Calu3 (cell line): ENCODE measurements at regions of chrX and their contacts with region 1.

Region 1: GRCh38 chrX:150715184-150715583 is 22.0 kb downstream of the MTMR1 start:
- DNase-seq: no peak
- H3K4me3 Mint-ChIP-seq: no peak overlapping the region
- H3K27ac Mint-ChIP-seq: no peak overlapping the region
- H3K4me1 Mint-ChIP-seq: peaks cover 18% of the 10 kb centered on the region
- H3K27me3 Mint-ChIP-seq: no peaks in the 10 kb centered on the region
- CTCF ChIP-seq: no peak

Region 2: GRCh38 chrX:150683536-150684146 is 31.5 kb before region 1 on chrX:
- CTCF ChIA-PET with region 1: interaction called, 4 read pairs
- intact Hi-C with region 1: loop called (anchors 1 kb)
- DNase-seq: peak; percentile 32
- H3K4me3 Mint-ChIP-seq: no peak overlapping the region
- H3K27ac Mint-ChIP-seq: no peak overlapping the region
- H3K4me1 Mint-ChIP-seq: peaks cover 8% of the 10 kb centered on the region
- H3K27me3 Mint-ChIP-seq: no peaks in the 10 kb centered on the region
- CTCF ChIP-seq: no peak